ENCODE measurements at regions of chr10 and their contacts with region 1.

Region 1: DNA sequence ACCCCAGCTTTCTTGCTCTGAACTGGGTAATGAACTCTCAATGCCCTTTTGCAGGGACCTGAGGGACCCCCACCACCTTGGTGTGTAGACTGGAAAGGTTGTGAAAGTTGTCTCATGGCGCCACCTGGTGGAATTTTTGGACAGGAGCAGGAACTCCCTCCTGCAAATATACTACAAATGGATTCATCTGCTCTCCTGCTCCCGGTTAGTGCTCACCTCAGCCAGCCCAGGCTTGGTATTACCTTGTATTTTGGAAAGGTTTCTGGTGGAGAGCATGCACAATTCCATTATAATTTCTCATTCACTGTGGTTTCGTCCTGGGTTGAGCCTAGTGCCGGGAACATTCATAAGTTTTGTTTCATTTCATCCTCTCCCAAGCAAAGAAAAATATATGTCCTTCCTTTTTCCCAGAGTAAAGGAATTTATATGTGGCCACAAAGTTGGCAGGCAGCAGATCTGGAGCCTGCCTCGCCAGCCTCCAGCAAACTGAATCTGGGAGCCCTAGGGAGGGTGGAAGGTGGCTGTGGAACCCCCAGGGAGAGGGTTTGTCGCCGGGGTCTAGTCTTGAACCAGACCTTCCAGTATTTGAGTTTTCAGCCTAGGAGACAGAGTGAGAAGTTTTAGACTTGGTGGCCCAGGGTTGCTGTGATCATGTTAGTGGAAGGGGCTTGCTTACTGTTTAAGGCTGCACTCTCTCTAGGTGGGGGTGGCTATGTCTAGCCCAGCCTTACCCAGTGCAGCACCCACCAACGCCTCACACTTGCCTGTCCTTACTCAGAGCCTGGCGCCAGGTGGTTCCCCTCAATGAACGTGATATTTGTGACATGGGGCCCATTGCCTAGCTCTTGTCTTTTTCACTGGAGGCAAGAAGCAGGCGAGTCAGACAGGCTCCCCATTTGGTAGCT is 9.5 kb downstream of the FAM241B start:
- H3K4me3 Mint-ChIP-seq: no peak overlapping the region
- H3K27ac Mint-ChIP-seq: no peak overlapping the region
- H3K4me1 Mint-ChIP-seq: no peaks in the 10 kb centered on the region
- H3K27me3 Mint-ChIP-seq: peaks cover 9% of the 10 kb centered on the region

Region 2: GRCh38 chr10:69425511-69426298 is 213.8 kb before region 1 on chr10:
- intact Hi-C with region 1: loop called (anchors 10 kb)
- H3K4me3 Mint-ChIP-seq: no peak overlapping the region
- H3K27ac Mint-ChIP-seq: peak overlapping the region; percentile 53
- H3K4me1 Mint-ChIP-seq: peaks cover 41% of the 10 kb centered on the region
- H3K27me3 Mint-ChIP-seq: peaks cover 8% of the 10 kb centered on the region

Region 3: GRCh38 chr10:69515699-69516259 is 123.8 kb before region 1 on chr10:
- intact Hi-C with region 1: loop called (anchors 1 kb)
- H3K4me3 Mint-ChIP-seq: no peak overlapping the region
- H3K27ac Mint-ChIP-seq: no peak overlapping the region
- H3K4me1 Mint-ChIP-seq: no peaks in the 10 kb centered on the region
- H3K27me3 Mint-ChIP-seq: peaks cover 30% of the 10 kb centered on the region